T-cell (primary cell): ENCODE measurements at regions of chr1 and their contacts with region 1.

Region 1: DNA sequence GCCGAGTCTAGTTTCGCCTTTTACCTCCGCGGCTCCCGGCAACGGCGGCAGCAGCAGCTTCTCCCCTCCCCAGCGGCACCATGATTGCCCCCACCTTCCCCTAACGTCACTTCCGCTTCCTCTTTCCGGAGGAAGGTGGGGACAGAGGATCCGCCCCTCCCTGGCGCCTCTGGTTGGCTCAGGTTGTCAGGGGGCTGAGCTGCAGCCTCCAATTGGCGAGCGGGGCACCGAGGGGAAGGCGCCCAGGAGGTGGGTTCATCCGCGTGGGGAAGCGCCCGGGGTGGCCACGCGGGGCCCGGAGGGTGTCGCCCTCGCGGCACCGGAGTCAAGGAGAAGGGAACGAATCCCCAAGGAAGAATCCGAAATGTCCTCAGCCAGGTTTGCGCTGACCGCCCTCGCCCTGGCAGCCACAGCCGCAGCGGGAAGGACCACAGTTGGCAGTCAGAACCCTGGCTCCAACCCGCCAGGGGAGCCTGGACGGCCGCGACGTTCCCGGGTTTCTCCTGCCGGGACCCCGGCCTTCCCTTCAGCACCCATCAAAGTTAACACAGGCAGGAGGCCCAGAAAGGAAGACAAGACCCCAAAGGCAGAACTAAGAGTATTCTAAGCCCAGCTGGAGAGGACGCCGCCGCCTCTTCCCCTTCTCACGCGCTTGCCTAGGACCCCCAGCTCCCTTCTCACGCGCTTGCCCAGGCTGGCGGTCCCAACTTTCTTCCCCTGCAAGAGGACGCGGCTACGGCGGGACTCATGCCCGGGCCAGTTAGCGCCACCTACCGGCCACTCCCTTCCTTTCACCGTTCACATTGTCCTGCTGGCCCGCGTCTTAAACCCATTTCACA is at the start of gene MTF1:
- DNase-seq: peak; percentile 89 to 99 (median 96)
- ATAC-seq: peak; percentile 98 to 99 (median 98)
- H3K4me3 ChIP-seq: peak within 1 kb of the TSS; percentile 97 to 99
- H3K4me3 Mint-ChIP-seq: peak within 1 kb of the TSS; percentile 94 to 100 (median 96)
- H3K27ac ChIP-seq: peak within 1 kb of the TSS; percentile 84
- H3K27ac Mint-ChIP-seq: peak within 1 kb of the TSS; percentile 96
- H3K4me1 ChIP-seq: peaks cover 11 to 28% of the 10 kb centered on the region in 2 experiments
- H3K4me1 Mint-ChIP-seq: peaks cover 34% of the 10 kb centered on the region in 3 donors
- H3K27me3 ChIP-seq: no peaks in the 10 kb centered on the region
- H3K27me3 Mint-ChIP-seq: no peaks in the 10 kb centered on the region
- total RNA-seq, gene MTF1: 23.6 to 29.9 (median 24.9) TPM

Region 2: GRCh38 chr1:37807555-37808368 is 52.0 kb before region 1 on chr1 and contains the starts of genes C1orf122 and YRDC:
- CTCF ChIA-PET with region 1: interaction called in 1 of 2 experiments, 19 read pairs
- POLR2A ChIA-PET with region 1: interaction called in 1 of 2 experiments, 10 read pairs
- DNase-seq: peak; percentile 81 to 94 (median 89)
- ATAC-seq: peak; percentile 94 to 95 (median 94)
- H3K4me3 ChIP-seq: peak within 1 kb of the TSS; percentile 82 to 96
- H3K4me3 Mint-ChIP-seq: peak within 1 kb of the TSS; percentile 85 to 96 (median 90)
- H3K27ac ChIP-seq: peak within 1 kb of the TSS; percentile 76
- H3K27ac Mint-ChIP-seq: peak within 1 kb of the TSS; percentile 94 to 96
- H3K4me1 ChIP-seq: peaks cover 3 to 33% of the 10 kb centered on the region in 2 experiments
- H3K4me1 Mint-ChIP-seq: peaks cover 39 to 46% (median 42%) of the 10 kb centered on the region in 3 donors
- H3K27me3 ChIP-seq: no peaks in the 10 kb centered on the region
- H3K27me3 Mint-ChIP-seq: no peaks in the 10 kb centered on the region
- total RNA-seq, gene C1orf122: 13.1 to 24.9 (median 15.8) TPM
- total RNA-seq, gene YRDC: 16.0 to 28.2 (median 18.4) TPM

Region 3: GRCh38 chr1:37840711-37841110 is 19.0 kb before region 1 on chr1:
- CTCF ChIA-PET with region 1: no interaction called
- POLR2A ChIA-PET with region 1: no interaction called
- DNase-seq: no peak
- ATAC-seq: no peak
- H3K4me3 ChIP-seq: no peak overlapping the region
- H3K4me3 Mint-ChIP-seq: no peak overlapping the region
- H3K27ac ChIP-seq: no peak overlapping the region
- H3K27ac Mint-ChIP-seq: no peak overlapping the region
- H3K4me1 ChIP-seq: no peaks in the 10 kb centered on the region
- H3K4me1 Mint-ChIP-seq: peaks cover 9 to 18% (median 14%) of the 10 kb centered on the region in 3 donors
- H3K27me3 ChIP-seq: no peaks in the 10 kb centered on the region
- H3K27me3 Mint-ChIP-seq: no peaks in the 10 kb centered on the region